Mammary epithelial cell (primary cell): ENCODE measurements at regions of chr6 and their contacts with region 1.

Region 1: DNA sequence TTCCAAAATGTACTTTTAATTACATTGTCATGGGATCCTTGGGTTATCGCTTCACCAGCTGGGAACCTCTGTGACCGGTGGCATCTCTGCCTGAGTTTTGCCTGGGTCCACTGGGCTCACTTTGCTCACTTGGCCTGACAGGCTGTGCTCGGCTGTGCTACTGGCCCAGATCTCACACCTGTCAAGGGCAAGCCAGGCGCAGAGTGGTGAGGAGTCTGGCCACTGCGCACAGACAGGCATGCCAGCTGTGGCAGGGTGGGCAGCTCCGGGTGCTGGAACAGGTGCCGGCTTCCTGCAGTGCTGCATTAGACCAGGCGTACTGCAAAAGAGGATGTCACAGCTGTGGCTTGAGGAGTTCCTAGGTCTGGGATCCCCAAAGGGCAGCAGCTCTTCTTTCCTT is 489.8 kb downstream of the TENT5A start:
- DNase-seq: no peak
- H3K4me3 ChIP-seq: no peak overlapping the region
- H3K27ac ChIP-seq: no peak overlapping the region
- H3K4me1 ChIP-seq: no peaks in the 10 kb centered on the region
- H3K27me3 ChIP-seq: no peaks in the 10 kb centered on the region
- CTCF ChIP-seq: no peak

Region 2: GRCh38 chr6:81309811-81310210 is 47.2 kb after region 1 on chr6:
- CTCF ChIA-PET with region 1: no interaction called
- dilution Hi-C with region 1: loop called (anchors 5 kb)
- in situ Hi-C with region 1: no loop called
- intact Hi-C with region 1: no loop called
- DNase-seq: no peak
- H3K4me3 ChIP-seq: no peak overlapping the region
- H3K27ac ChIP-seq: no peak overlapping the region
- H3K4me1 ChIP-seq: no peaks in the 10 kb centered on the region
- H3K27me3 ChIP-seq: no peaks in the 10 kb centered on the region
- CTCF ChIP-seq: no peak